CD8-positive, alpha-beta T cell (primary cell): ENCODE measurements at regions of chr14 and their contacts with region 1.

Region 1: DNA sequence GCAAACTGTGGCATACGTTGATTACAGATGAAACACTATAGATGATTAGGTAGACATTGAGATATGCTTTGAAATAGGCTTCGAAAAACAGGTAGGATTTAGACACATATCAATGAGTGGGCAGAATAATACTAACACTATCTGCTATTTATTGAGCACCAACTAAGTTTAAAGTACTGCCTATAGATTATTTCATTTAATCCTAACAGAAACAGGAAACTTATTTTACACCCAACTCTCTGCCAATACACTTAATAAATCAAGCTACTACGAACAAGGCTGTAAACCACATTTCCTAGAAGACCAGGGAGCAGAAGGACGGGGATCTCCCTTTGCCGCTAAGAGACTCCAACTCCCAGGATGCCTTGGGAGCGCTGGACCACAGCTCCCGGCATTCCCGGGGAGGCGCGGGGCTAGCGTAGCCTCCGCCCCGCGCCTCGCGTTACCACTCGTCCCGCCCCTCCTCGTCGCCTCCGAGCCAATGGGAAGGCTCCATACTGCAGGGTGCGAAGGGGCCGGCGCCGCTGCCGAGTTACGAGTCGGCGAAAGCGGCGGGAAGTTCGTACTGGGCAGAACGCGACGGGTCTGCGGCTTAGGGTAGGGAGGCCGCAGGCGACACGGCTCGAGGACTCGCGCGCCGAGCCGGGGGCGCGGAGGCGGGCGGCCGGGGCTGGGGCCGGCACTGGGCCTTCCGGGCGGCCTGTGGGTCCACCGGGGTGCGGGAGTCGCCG is at the start of gene VRK1:
- DNase-seq: peak; percentile 90 to 97 (median 94)
- ATAC-seq: peak; percentile 97
- H3K4me3 ChIP-seq: peak within 1 kb of the TSS; percentile 68 to 73
- H3K4me3 Mint-ChIP-seq: peak within 1 kb of the TSS; percentile 87
- H3K27ac ChIP-seq: peak within 1 kb of the TSS; percentile 54 to 66
- H3K27ac Mint-ChIP-seq: peak within 1 kb of the TSS; percentile 93
- H3K4me1 ChIP-seq: peaks cover 19% of the 10 kb centered on the region
- H3K4me1 Mint-ChIP-seq: peaks cover 24% of the 10 kb centered on the region
- H3K27me3 ChIP-seq: no peaks in the 10 kb centered on the region
- H3K27me3 Mint-ChIP-seq: no peaks in the 10 kb centered on the region
- CTCF ChIP-seq: no peak
- total RNA-seq, gene VRK1: 47.2 to 50.4 TPM

Region 2: DNA sequence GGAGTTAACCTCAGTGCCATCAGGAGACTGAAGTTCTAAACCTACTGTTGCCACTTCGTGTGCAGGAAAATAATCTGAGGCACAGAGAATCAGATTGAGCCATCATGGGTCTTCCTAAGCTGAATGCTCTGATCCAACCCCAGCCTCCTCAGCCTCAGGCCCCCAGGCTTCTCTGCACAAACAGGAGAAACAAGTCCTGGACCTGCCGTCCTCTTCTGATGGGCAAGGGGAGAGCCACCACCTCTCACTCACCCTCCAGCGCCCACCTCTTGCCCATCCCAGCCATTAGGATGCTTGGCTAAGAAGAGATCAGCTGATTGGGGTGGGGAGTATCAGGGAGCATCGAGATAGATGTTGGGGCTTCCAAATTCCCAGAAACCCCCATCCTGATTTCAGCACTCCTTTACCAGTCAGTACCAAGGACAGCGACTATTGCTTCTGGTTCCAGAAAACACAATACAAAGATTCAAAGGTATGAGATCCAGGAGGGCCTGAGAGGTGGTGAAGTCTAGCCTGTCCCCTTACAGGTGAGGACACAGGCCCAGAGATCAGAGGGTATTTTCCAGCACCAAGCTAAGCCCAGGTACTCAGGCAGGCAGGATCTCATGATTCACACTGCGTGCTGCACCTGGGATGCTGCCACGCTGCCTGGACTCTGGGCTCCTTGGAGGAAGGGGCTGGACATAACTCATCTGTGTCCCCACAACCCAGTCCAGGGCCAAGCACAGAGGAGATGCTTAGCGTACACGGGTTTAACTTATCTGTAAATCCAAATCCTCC is 843.9 kb before region 1 on chr14:
- CTCF ChIA-PET with region 1: no interaction called
- POLR2A ChIA-PET with region 1: no interaction called
- intact Hi-C with region 1: no loop called
- DNase-seq: no peak
- ATAC-seq: no peak
- H3K4me3 ChIP-seq: no peak overlapping the region
- H3K4me3 Mint-ChIP-seq: no peak overlapping the region
- H3K27ac ChIP-seq: no peak overlapping the region
- H3K27ac Mint-ChIP-seq: no peak overlapping the region
- H3K4me1 ChIP-seq: no peaks in the 10 kb centered on the region
- H3K4me1 Mint-ChIP-seq: no peaks in the 10 kb centered on the region
- H3K27me3 ChIP-seq: peaks cover 0 to 3% of the 10 kb centered on the region in 2 experiments
- H3K27me3 Mint-ChIP-seq: peaks cover 43% of the 10 kb centered on the region
- CTCF ChIP-seq: no peak

Region 3: DNA sequence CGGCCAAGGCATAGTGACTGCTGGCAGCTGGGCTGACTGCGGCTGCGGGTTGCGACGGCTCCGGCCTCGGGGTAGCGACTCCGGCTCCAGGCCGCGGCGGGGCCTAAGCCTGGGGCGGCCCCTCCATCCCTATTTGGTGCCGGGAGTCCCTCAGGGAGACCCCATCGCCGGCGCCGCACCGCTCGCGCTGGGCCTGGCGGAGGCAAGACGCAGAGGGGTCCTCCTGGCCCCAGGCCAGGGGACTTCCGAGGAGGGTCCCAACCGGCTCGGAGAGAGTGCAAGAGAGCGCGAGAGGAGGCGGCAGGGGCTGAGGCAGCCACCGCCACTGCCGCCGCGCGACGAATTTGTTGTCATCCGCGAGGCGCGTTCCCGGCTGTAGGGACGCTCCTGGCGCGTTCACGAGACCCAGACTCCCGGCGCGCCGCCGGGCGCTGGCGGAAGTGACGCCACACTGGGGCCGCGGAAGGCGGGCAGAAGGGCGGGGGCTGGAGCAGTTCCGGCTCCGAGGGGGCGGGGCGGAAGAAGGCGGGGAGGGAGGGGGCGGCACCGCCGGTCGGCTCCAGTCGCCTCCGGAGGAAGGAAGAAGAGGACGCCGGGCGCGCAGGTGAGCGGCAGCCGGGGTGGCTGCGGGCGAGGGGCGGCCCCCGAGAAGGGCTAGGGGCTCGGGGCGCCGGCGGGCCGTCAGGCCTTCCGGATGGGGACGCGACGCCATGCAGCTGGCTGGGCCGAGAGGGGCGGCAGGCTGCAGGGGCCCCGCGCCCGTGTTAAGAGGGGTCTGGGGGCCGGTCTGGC is 433.9 kb before region 1 on chr14 and contains the starts of genes ATG2B and GSKIP:
- CTCF ChIA-PET with region 1: no interaction called
- POLR2A ChIA-PET with region 1: no interaction called
- intact Hi-C with region 1: loop called in 1 of 2 experiments (anchors 2 kb)
- DNase-seq: peak; percentile 95 to 99 (median 98)
- ATAC-seq: peak; percentile 84
- H3K4me3 ChIP-seq: peak within 1 kb of the TSS; percentile 87 to 97
- H3K4me3 Mint-ChIP-seq: peak within 1 kb of the TSS; percentile 89
- H3K27ac ChIP-seq: peak within 1 kb of the TSS; percentile 89 to 93
- H3K27ac Mint-ChIP-seq: peak within 1 kb of the TSS; percentile 89
- H3K4me1 ChIP-seq: peaks cover 28% of the 10 kb centered on the region
- H3K4me1 Mint-ChIP-seq: peaks cover 59% of the 10 kb centered on the region
- H3K27me3 ChIP-seq: no peaks in the 10 kb centered on the region
- H3K27me3 Mint-ChIP-seq: no peaks in the 10 kb centered on the region
- CTCF ChIP-seq: no peak
- total RNA-seq, gene ATG2B: 16.0 to 17.9 TPM
- total RNA-seq, gene GSKIP: 9.4 to 13.5 TPM

Region 4: GRCh38 chr14:96501742-96502617 is 295.0 kb before region 1 on chr14 and contains the start of gene PAPOLA:
- CTCF ChIA-PET with region 1: no interaction called
- POLR2A ChIA-PET with region 1: no interaction called
- intact Hi-C with region 1: loop called (anchors 1 to 2 kb)
- DNase-seq: peak; percentile 88 to 98 (median 95)
- ATAC-seq: peak; percentile 85
- H3K4me3 ChIP-seq: peak within 1 kb of the TSS; percentile 89 to 92
- H3K4me3 Mint-ChIP-seq: peak within 1 kb of the TSS; percentile 93
- H3K27ac ChIP-seq: peak within 1 kb of the TSS; percentile 81 to 95
- H3K27ac Mint-ChIP-seq: peak within 1 kb of the TSS; percentile 99
- H3K4me1 ChIP-seq: peaks cover 46% of the 10 kb centered on the region
- H3K4me1 Mint-ChIP-seq: peaks cover 49% of the 10 kb centered on the region
- H3K27me3 ChIP-seq: no peaks in the 10 kb centered on the region
- H3K27me3 Mint-ChIP-seq: peaks cover 4% of the 10 kb centered on the region
- CTCF ChIP-seq: no peak
- total RNA-seq, gene PAPOLA: 164 to 176 TPM

Region 5: GRCh38 chr14:96683562-96684289 is 113.3 kb before region 1 on chr14:
- CTCF ChIA-PET with region 1: no interaction called
- POLR2A ChIA-PET with region 1: no interaction called
- intact Hi-C with region 1: no loop called
- DNase-seq: no peak
- ATAC-seq: no peak
- H3K4me3 ChIP-seq: no peak overlapping the region
- H3K4me3 Mint-ChIP-seq: no peak overlapping the region
- H3K27ac ChIP-seq: no peak overlapping the region
- H3K27ac Mint-ChIP-seq: no peak overlapping the region
- H3K4me1 ChIP-seq: no peaks in the 10 kb centered on the region
- H3K4me1 Mint-ChIP-seq: no peaks in the 10 kb centered on the region
- H3K27me3 ChIP-seq: no peaks in the 10 kb centered on the region
- H3K27me3 Mint-ChIP-seq: peaks cover 19% of the 10 kb centered on the region
- CTCF ChIP-seq: no peak

Region 6: DNA sequence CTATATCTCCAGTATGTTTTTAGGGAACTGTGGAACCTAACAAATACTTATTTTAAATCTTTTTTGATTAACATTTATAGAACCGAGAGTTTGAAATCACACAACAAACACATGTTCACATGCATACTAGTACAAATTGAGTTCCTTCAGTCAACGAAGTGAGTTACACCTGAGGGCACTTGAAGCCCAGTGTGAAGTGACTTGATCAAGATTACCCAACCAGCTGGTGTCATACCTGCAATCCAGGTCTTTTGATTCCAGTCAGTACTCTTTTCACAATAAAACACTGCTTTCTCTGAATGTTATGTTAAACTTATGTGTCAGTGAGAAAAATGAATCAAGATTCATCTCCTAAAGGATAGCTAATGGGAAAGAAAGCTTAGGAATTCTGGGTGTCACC is 35.3 kb after region 1 on chr14:
- CTCF ChIA-PET with region 1: no interaction called
- POLR2A ChIA-PET with region 1: no interaction called
- intact Hi-C with region 1: no loop called
- DNase-seq: no peak
- ATAC-seq: no peak
- H3K4me3 ChIP-seq: no peak overlapping the region
- H3K4me3 Mint-ChIP-seq: no peak overlapping the region
- H3K27ac ChIP-seq: no peak overlapping the region
- H3K27ac Mint-ChIP-seq: no peak overlapping the region
- H3K4me1 ChIP-seq: no peaks in the 10 kb centered on the region
- H3K4me1 Mint-ChIP-seq: peaks cover 10% of the 10 kb centered on the region
- H3K27me3 ChIP-seq: no peaks in the 10 kb centered on the region
- H3K27me3 Mint-ChIP-seq: no peaks in the 10 kb centered on the region
- CTCF ChIP-seq: no peak

Region 7: DNA sequence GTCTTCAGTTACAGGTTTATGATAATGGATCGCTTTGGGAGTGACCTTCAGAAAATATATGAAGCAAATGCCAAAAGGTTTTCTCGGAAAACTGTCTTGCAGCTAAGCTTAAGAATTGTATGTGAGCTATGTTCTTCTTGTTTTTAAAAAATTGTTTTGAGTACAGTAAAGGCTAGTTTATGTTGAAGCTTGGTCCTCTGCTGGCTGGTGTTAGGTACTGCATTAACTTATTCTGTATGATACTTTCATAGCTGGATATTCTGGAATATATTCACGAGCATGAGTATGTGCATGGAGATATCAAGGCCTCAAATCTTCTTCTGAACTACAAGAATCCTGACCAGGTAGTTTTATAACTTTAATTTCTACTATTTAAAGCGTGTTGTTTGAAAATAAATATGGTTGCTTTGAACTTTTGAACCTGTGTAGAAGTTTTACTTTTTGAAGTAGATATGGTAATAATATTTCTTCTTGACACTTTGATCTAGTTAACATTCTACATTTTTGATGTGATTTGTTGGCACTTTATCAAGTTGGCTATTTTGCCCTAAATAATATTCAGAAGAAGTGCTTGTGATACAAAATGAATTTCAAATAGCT is 55.9 kb after region 1 on chr14:
- CTCF ChIA-PET with region 1: interaction called, 4 read pairs
- POLR2A ChIA-PET with region 1: no interaction called
- intact Hi-C with region 1: loop called in 1 of 2 experiments (anchors 2 kb)
- DNase-seq: peak in 3 of 9 experiments; percentile 18 to 52 (median 29)
- ATAC-seq: peak; percentile 59
- H3K4me3 ChIP-seq: no peak overlapping the region
- H3K4me3 Mint-ChIP-seq: no peak overlapping the region
- H3K27ac ChIP-seq: no peak overlapping the region
- H3K27ac Mint-ChIP-seq: no peak overlapping the region
- H3K4me1 ChIP-seq: no peaks in the 10 kb centered on the region
- H3K4me1 Mint-ChIP-seq: peaks cover 3% of the 10 kb centered on the region
- H3K27me3 ChIP-seq: no peaks in the 10 kb centered on the region
- H3K27me3 Mint-ChIP-seq: no peaks in the 10 kb centered on the region
- CTCF ChIP-seq: peak; percentile 83

Region 8: GRCh38 chr14:97359341-97359740 is 562.3 kb after region 1 on chr14:
- CTCF ChIA-PET with region 1: no interaction called
- POLR2A ChIA-PET with region 1: no interaction called
- intact Hi-C with region 1: no loop called
- DNase-seq: no peak
- ATAC-seq: no peak
- H3K4me3 ChIP-seq: no peak overlapping the region
- H3K4me3 Mint-ChIP-seq: no peak overlapping the region
- H3K27ac ChIP-seq: no peak overlapping the region
- H3K27ac Mint-ChIP-seq: no peak overlapping the region
- H3K4me1 ChIP-seq: no peaks in the 10 kb centered on the region
- H3K4me1 Mint-ChIP-seq: peaks cover 3% of the 10 kb centered on the region
- H3K27me3 ChIP-seq: no peaks in the 10 kb centered on the region
- H3K27me3 Mint-ChIP-seq: no peaks in the 10 kb centered on the region
- CTCF ChIP-seq: no peak

Region 9: GRCh38 chr14:98227000-98227726 is 1430.1 kb after region 1 on chr14:
- CTCF ChIA-PET with region 1: no interaction called
- POLR2A ChIA-PET with region 1: no interaction called
- intact Hi-C with region 1: loop called in 1 of 2 experiments (anchors 10 kb)
- DNase-seq: peak in 2 of 9 experiments; percentile 32 to 57
- ATAC-seq: no peak
- H3K4me3 ChIP-seq: peak overlapping the region in 1 of 2 experiments; percentile 25
- H3K4me3 Mint-ChIP-seq: peak overlapping the region; percentile 67
- H3K27ac ChIP-seq: peak overlapping the region; percentile 41 to 63
- H3K27ac Mint-ChIP-seq: peak overlapping the region; percentile 92
- H3K4me1 ChIP-seq: peaks cover 92% of the 10 kb centered on the region
- H3K4me1 Mint-ChIP-seq: peaks cover 89% of the 10 kb centered on the region
- H3K27me3 ChIP-seq: no peaks in the 10 kb centered on the region
- H3K27me3 Mint-ChIP-seq: no peaks in the 10 kb centered on the region
- CTCF ChIP-seq: no peak